ENCODE measurements at regions of chr5 and their contacts with region 1.

Region 1: GRCh38 chr5:132883261-132883834 is 9.9 kb downstream of the LEAP2 start:
- DNase-seq: no peak
- ATAC-seq: peak; percentile 72
- H3K4me3 Mint-ChIP-seq: no peak overlapping the region
- H3K27ac Mint-ChIP-seq: peak overlapping the region; percentile 53
- H3K4me1 Mint-ChIP-seq: peaks cover 12% of the 10 kb centered on the region
- H3K27me3 Mint-ChIP-seq: no peaks in the 10 kb centered on the region
- CTCF ChIP-seq: no peak

Region 2: GRCh38 chr5:132591145-132591544 is 292.2 kb before region 1 on chr5:
- CTCF ChIA-PET with region 1: no interaction called
- POLR2A ChIA-PET with region 1: no interaction called
- intact Hi-C with region 1: loop called (anchors 10 kb)
- DNase-seq: no peak
- ATAC-seq: no peak
- H3K4me3 Mint-ChIP-seq: no peak overlapping the region
- H3K27ac Mint-ChIP-seq: no peak overlapping the region
- H3K4me1 Mint-ChIP-seq: no peaks in the 10 kb centered on the region
- H3K27me3 Mint-ChIP-seq: no peaks in the 10 kb centered on the region
- CTCF ChIP-seq: no peak

Region 3: DNA sequence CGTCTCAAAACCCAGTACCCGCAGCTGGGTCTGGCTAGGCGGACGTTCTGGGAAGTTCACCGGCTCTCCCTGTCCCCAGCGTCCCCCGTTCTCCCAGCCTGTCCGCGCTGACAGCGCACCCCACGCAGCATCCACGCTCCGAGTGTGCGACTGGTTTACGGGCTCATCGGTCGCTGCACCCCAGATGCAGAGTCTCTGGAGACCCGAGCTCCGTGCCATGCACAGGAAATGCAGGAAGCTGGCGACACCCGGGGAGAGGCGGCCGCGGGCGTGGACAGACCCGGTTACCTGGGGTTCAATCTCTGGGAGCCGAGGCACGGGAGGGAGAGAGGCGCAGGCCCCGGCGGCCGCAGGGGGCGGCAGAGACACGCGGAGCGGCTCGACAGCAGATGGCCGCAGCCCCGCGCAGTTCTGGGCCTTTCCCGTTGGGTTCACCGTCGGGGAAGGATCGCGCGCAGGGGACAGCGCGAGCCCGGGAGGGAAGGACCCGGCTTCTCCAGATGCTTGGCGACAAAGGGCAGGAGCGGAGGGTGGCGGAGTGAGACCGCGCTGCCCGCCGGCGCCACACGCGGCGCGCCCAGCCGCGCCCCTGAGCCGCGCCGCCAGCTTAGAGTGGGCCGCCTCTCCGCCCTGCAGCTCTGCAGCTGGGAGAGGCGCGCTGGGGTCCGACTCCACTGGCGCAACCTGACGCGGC is 53.5 kb before region 1 on chr5:
- CTCF ChIA-PET with region 1: interaction called, 16 read pairs
- POLR2A ChIA-PET with region 1: interaction called, 5 read pairs
- intact Hi-C with region 1: loop called (anchors 1 kb)
- DNase-seq: peak; percentile 78
- ATAC-seq: peak; percentile 86
- H3K4me3 Mint-ChIP-seq: peak overlapping the region; percentile 91
- H3K27ac Mint-ChIP-seq: peak overlapping the region; percentile 41
- H3K4me1 Mint-ChIP-seq: peaks cover 14% of the 10 kb centered on the region
- H3K27me3 Mint-ChIP-seq: peaks cover 24% of the 10 kb centered on the region
- CTCF ChIP-seq: peak; percentile 27

Region 4: DNA sequence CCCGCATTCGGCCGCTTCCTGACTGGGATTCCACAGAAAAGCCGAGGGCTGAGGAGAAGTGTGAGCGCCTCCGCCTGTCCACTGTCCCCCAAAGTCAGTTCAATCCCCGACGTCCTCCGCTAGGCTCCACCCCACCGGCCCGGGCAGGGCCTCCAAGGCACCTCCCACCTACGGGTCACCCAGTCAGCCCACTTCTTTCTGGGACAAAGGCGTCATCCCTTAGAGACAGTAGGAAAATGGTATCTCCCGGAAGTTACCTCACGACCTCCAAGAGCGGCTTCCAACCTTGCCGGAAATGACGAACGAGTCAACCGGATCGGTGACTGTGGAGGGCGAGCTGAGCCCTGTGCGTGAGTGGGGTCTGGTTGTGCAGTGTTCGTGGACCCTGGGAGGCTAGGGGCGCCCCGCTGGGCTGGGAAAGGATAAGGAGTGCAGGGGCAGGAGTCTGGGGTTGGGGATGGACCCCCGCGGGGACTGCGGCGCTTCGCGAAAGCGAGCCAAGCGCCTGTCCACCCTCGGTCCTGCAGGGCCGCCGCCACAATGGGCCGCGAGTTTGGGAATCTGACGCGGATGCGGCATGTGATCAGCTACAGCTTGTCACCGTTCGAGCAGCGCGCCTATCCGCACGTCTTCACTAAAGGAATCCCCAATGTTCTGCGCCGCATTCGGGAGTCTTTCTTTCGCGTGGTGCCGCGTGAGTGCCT is 16.9 kb before region 1 on chr5 and contains the starts of genes GDF9 and UQCRQ:
- CTCF ChIA-PET with region 1: no interaction called
- POLR2A ChIA-PET with region 1: interaction called, 6 read pairs
- intact Hi-C with region 1: loop called (anchors 2 kb)
- DNase-seq: peak; percentile 77
- ATAC-seq: peak; percentile 98
- H3K4me3 Mint-ChIP-seq: peak within 1 kb of the TSS; percentile 99
- H3K27ac Mint-ChIP-seq: peak within 1 kb of the TSS; percentile 98
- H3K4me1 Mint-ChIP-seq: peaks cover 25% of the 10 kb centered on the region
- H3K27me3 Mint-ChIP-seq: no peaks in the 10 kb centered on the region
- CTCF ChIP-seq: no peak
- total RNA-seq, gene GDF9: 0.29 and 0.39 TPM in 2 replicates
- total RNA-seq, gene UQCRQ: 197 and 218 TPM in 2 replicates

Region 5: GRCh38 chr5:133602835-133603380 is 719.6 kb after region 1 on chr5:
- CTCF ChIA-PET with region 1: no interaction called
- POLR2A ChIA-PET with region 1: no interaction called
- intact Hi-C with region 1: no loop called
- DNase-seq: no peak
- ATAC-seq: no peak
- H3K4me3 Mint-ChIP-seq: no peak overlapping the region
- H3K27ac Mint-ChIP-seq: no peak overlapping the region
- H3K4me1 Mint-ChIP-seq: no peaks in the 10 kb centered on the region
- H3K27me3 Mint-ChIP-seq: peaks cover 32% of the 10 kb centered on the region
- CTCF ChIP-seq: no peak